Esophagus muscularis mucosa (tissue), 4 donors: ENCODE measurements at regions of chr6 and their contacts with region 1.

Region 1: GRCh38 chr6:156776840-156777576 is at the start of gene ARID1B:
- DNase-seq: no peak
- H3K4me3 ChIP-seq: peak within 1 kb of the TSS; percentile 91 to 96 (median 94)
- H3K27ac ChIP-seq: peak within 1 kb of the TSS; percentile 97 to 99 (median 98)
- H3K4me1 ChIP-seq: peaks cover 23 to 48% (median 40%) of the 10 kb centered on the region in 4 donors
- H3K27me3 ChIP-seq: no peaks in the 10 kb centered on the region
- CTCF ChIP-seq: no peak
- EP300 ChIP-seq: no peak
- POLR2A ChIP-seq: peak; percentile 37
- total RNA-seq, gene ARID1B: 55.0 to 87.2 (median 72.7) TPM

Region 2: DNA sequence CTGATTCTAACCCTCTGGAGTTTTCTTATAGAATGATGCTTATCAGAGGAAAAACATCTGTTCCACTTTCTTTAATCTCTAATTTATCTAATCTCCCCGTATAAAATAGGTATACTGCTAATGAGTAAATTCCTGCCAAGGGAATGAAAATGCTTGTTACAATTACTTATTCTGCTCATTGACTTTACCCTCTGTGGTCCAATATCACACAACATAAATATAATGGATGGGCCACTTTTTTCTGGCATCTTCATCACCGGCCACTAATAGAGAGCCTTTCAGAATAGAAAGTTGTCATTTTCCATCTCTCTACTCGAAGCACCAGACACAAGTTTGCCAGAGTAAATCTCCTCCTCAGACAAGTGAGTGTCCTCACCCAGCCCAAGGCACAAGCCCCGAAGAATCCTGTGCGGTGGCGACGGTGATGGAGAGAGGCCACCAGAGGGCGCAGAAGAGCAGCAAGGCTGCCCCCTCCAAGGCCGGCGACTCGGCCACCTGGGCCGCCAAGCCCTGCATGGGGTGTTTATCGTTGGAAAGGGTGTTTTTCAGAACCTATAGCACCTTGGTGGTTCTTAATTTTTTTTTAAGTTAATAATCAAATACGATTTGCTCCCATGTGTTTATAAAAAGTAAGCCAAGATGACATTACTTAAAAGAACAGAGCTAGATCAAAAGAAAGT is 212.7 kb before region 1 on chr6:
- intact Hi-C with region 1: loop called (anchors 2 kb)
- DNase-seq: no peak
- H3K4me3 ChIP-seq: peak overlapping the region in 1 of 4 donors; percentile 0
- H3K27ac ChIP-seq: peak overlapping the region in 2 of 4 donors; percentile 22 to 42
- H3K4me1 ChIP-seq: peaks cover 8 to 14% (median 13%) of the 10 kb centered on the region in 4 donors
- H3K27me3 ChIP-seq: no peaks in the 10 kb centered on the region
- CTCF ChIP-seq: peak; percentile 87 to 97 (median 90)
- EP300 ChIP-seq: no peak
- POLR2A ChIP-seq: no peak

Region 3: GRCh38 chr6:156686995-156687788 is 89.8 kb before region 1 on chr6:
- intact Hi-C with region 1: loop called (anchors 2 kb)
- DNase-seq: peak; percentile 98
- H3K4me3 ChIP-seq: peak overlapping the region; percentile 63 to 81 (median 76)
- H3K27ac ChIP-seq: peak overlapping the region; percentile 93 to 99 (median 97)
- H3K4me1 ChIP-seq: peaks cover 0 to 21% (median 18%) of the 10 kb centered on the region in 4 donors
- H3K27me3 ChIP-seq: no peaks in the 10 kb centered on the region
- CTCF ChIP-seq: no peak
- EP300 ChIP-seq: peak; percentile 14
- POLR2A ChIP-seq: peak; percentile 78

Region 4: DNA sequence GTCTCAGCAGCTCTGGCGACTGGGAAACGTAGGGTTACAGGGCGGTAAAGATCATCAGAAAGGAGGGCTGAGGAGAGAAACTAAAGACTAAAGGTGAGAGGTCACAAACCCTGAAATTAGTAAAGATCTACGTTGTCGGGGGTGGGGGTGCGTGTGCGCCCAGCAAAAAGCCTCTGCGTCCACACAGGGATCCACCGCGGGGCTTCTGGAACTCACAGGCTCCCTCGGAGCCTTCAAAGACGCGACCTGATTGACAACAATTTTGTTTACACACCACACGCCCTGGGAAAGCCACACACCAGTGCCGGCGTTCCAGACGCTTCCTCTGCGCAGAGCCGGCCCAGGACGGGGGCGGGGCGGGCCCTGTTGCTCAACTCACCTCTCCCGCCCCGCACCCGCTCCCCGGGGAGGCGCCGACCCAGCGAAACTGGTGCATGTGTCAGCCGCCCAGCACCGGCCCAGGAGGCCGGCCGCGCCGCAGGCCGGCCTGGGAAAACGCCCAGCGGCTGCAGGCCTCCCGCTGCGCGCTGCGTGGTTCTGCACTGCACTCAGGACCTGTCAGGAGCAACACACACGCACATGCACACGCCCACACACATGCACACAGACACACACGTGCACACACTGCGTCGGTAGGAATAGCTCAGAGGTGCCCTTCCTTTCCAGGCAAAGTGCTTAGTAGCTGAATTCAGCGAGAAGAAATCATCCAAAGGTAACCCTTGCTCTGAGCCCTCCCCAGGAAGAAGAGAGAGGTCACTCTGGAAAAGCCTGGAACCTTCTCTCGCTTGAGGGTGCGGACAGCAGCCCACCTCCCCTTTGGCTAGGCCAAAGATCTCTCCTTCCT is 57.1 kb before region 1 on chr6:
- intact Hi-C with region 1: loop called (anchors 2 kb)
- DNase-seq: peak; percentile 97
- H3K4me3 ChIP-seq: peak overlapping the region; percentile 48 to 55 (median 52)
- H3K27ac ChIP-seq: peak overlapping the region; percentile 84 to 92 (median 88)
- H3K4me1 ChIP-seq: peaks cover 16 to 34% (median 29%) of the 10 kb centered on the region in 4 donors
- H3K27me3 ChIP-seq: no peaks in the 10 kb centered on the region
- CTCF ChIP-seq: peak in 1 of 3 experiments; percentile 14
- EP300 ChIP-seq: no peak
- POLR2A ChIP-seq: no peak

Region 5: GRCh38 chr6:156953479-156954146 is 176.6 kb after region 1 on chr6:
- intact Hi-C with region 1: loop called (anchors 10 kb)
- DNase-seq: no peak
- H3K4me3 ChIP-seq: peak overlapping the region in 1 of 4 donors; percentile 11
- H3K27ac ChIP-seq: peak overlapping the region in 3 of 4 donors; percentile 2 to 34 (median 20)
- H3K4me1 ChIP-seq: peaks cover 63 to 88% (median 80%) of the 10 kb centered on the region in 4 donors
- H3K27me3 ChIP-seq: no peaks in the 10 kb centered on the region
- CTCF ChIP-seq: peak; percentile 44 to 60 (median 57)
- EP300 ChIP-seq: no peak
- POLR2A ChIP-seq: no peak

Region 6: GRCh38 chr6:157021344-157021992 is 244.5 kb after region 1 on chr6:
- intact Hi-C with region 1: loop called (anchors 2 kb)
- DNase-seq: peak; percentile 96
- H3K4me3 ChIP-seq: peak overlapping the region; percentile 74 to 93 (median 80)
- H3K27ac ChIP-seq: peak overlapping the region; percentile 96 to 100 (median 98)
- H3K4me1 ChIP-seq: peaks cover 26 to 59% (median 41%) of the 10 kb centered on the region in 4 donors
- H3K27me3 ChIP-seq: no peaks in the 10 kb centered on the region
- CTCF ChIP-seq: peak; percentile 27 to 56 (median 28)
- EP300 ChIP-seq: no peak
- POLR2A ChIP-seq: peak; percentile 95

Region 7: GRCh38 chr6:157184202-157185020 is 407.4 kb after region 1 on chr6:
- intact Hi-C with region 1: loop called (anchors 5 kb)
- DNase-seq: no peak
- H3K4me3 ChIP-seq: peak overlapping the region; percentile 10 to 32 (median 23)
- H3K27ac ChIP-seq: peak overlapping the region in 3 of 4 donors; percentile 7 to 54 (median 28)
- H3K4me1 ChIP-seq: peaks cover 6 to 35% (median 33%) of the 10 kb centered on the region in 4 donors
- H3K27me3 ChIP-seq: no peaks in the 10 kb centered on the region
- CTCF ChIP-seq: peak; percentile 93 to 99 (median 93)
- EP300 ChIP-seq: no peak
- POLR2A ChIP-seq: no peak